ENCODE measurements at regions of chr17 and their contacts with region 1.

Region 1: DNA sequence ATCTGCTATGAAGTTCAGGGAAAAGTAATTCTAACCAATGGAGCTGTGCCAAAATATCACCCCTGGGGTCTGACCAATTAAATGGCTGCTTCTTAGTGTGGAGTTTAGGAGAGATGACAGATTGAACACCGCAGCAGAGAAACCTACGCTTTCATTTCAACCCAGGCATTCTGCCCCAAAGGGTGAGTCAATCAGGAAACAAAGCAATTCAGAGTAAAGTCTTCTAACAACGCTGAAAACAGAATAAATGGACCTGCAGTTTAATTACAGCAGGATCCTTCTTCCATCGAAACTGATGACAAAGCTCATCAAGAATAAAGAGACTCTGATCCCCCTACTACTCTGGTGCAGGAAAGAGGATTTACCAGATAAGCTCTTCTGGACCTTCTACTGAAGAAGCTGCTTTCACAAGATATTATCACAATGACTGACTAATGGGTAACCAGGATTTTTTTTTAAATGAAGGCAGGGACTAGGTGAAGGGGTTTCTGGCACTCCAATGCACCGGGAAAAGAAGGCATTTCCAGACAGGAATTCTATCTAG is 16.7 kb downstream of the RFFL start:
- DNase-seq: no peak
- ATAC-seq: peak; percentile 92
- H3K4me3 Mint-ChIP-seq: peak overlapping the region; percentile 86
- H3K27ac Mint-ChIP-seq: peak overlapping the region; percentile 91
- H3K4me1 Mint-ChIP-seq: peaks cover 36% of the 10 kb centered on the region
- H3K27me3 Mint-ChIP-seq: no peaks in the 10 kb centered on the region

Region 2: GRCh38 chr17:35011671-35012210 is 35.1 kb before region 1 on chr17:
- POLR2A ChIA-PET with region 1: no interaction called
- DNase-seq: no peak
- ATAC-seq: no peak
- H3K4me3 Mint-ChIP-seq: no peak overlapping the region
- H3K27ac Mint-ChIP-seq: peak overlapping the region; percentile 55
- H3K4me1 Mint-ChIP-seq: no peaks in the 10 kb centered on the region
- H3K27me3 Mint-ChIP-seq: no peaks in the 10 kb centered on the region

Region 3: GRCh38 chr17:35063514-35064223 is 16.9 kb after region 1 on chr17 and contains the start of gene RFFL:
- POLR2A ChIA-PET with region 1: interaction called, 20 read pairs
- DNase-seq: peak; percentile 63
- ATAC-seq: peak; percentile 99
- H3K4me3 Mint-ChIP-seq: peak within 1 kb of the TSS; percentile 69
- H3K27ac Mint-ChIP-seq: peak within 1 kb of the TSS; percentile 91
- H3K4me1 Mint-ChIP-seq: peaks cover 27% of the 10 kb centered on the region
- H3K27me3 Mint-ChIP-seq: no peaks in the 10 kb centered on the region
- total RNA-seq, gene RFFL: 37.4 to 42.3 TPM

Region 4: GRCh38 chr17:35127751-35128514 is 81.1 kb after region 1 on chr17:
- POLR2A ChIA-PET with region 1: no interaction called
- DNase-seq: no peak
- ATAC-seq: no peak
- H3K4me3 Mint-ChIP-seq: no peak overlapping the region
- H3K27ac Mint-ChIP-seq: no peak overlapping the region
- H3K4me1 Mint-ChIP-seq: no peaks in the 10 kb centered on the region
- H3K27me3 Mint-ChIP-seq: no peaks in the 10 kb centered on the region

Measured in activated naive CD8-positive, alpha-beta T cell treated with anti-CD3 and anti-CD28 coated beads, Interleukin-2, amount 10 ng/mL, durations not matched to agents 7 days and 5 days (primary cell).